Activated CD4-positive, alpha-beta T cell treated with anti-CD3 and anti-CD28 coated beads for 36 hours (primary cell): ENCODE measurements at regions of chr6 and their contacts with region 1.

Region 1: GRCh38 chr6:20708367-20709124 is 174.3 kb downstream of the CDKAL1 start:
- DNase-seq: peak; percentile 49
- ATAC-seq: peak; percentile 43
- H3K4me3 Mint-ChIP-seq: no peak overlapping the region
- H3K27ac Mint-ChIP-seq: peak overlapping the region; percentile 23
- H3K4me1 Mint-ChIP-seq: peaks cover 55% of the 10 kb centered on the region
- H3K27me3 Mint-ChIP-seq: no peaks in the 10 kb centered on the region

Region 2: DNA sequence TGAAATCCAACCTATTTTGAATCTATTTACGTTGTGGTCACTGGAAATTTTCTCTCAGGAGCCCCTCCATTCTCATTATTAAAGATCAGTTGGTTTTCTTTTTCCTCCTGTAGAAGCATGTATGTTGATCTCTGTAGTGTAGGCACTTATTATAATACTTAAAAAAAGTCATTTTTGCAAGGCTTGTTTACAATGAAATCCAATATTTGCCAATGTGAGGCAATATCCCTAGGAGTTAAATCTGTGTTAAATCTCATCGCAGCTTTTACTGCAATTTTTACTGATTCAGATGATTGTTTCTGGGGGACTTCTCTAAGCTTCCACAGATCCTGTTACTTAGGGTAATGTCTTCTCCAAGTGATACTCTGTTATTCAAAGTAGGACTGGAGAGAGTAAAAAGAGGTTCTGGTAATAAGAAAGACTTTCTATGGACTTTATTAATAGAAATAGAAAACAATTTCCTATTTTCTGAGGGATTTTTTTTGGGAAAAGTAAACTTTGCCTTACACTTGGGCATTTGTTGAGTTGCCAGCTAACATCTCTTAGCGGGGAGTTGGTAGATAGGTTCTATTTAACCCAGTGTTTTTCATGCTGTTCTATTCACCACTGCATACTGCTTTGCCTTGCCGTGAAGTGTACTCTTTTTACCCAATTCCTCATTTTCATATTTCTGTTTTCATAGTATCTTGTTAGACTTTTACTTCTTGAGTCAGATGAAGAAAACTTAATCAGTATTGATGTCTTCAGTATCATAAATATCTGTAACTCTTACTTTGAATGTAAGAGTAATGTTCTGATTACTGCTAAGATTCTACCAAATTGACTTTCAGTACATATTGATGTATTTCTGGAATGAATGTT is 125.7 kb before region 1 on chr6:
- CTCF ChIA-PET with region 1: no interaction called
- POLR2A ChIA-PET with region 1: no interaction called
- intact Hi-C with region 1: loop called in 1 of 2 experiments (anchors 1 kb)
- DNase-seq: no peak
- ATAC-seq: peak; percentile 86
- H3K4me3 Mint-ChIP-seq: no peak overlapping the region
- H3K27ac Mint-ChIP-seq: no peak overlapping the region
- H3K4me1 Mint-ChIP-seq: peaks cover 26% of the 10 kb centered on the region
- H3K27me3 Mint-ChIP-seq: no peaks in the 10 kb centered on the region

Region 3: GRCh38 chr6:20661721-20662120 is 46.8 kb before region 1 on chr6:
- CTCF ChIA-PET with region 1: no interaction called
- POLR2A ChIA-PET with region 1: no interaction called
- intact Hi-C with region 1: no loop called
- DNase-seq: no peak
- ATAC-seq: no peak
- H3K4me3 Mint-ChIP-seq: no peak overlapping the region
- H3K27ac Mint-ChIP-seq: no peak overlapping the region
- H3K4me1 Mint-ChIP-seq: peaks cover 12% of the 10 kb centered on the region
- H3K27me3 Mint-ChIP-seq: no peaks in the 10 kb centered on the region

Region 4: GRCh38 chr6:20735997-20736396 is 27.5 kb after region 1 on chr6:
- CTCF ChIA-PET with region 1: no interaction called
- POLR2A ChIA-PET with region 1: no interaction called
- intact Hi-C with region 1: no loop called
- DNase-seq: no peak
- ATAC-seq: no peak
- H3K4me3 Mint-ChIP-seq: no peak overlapping the region
- H3K27ac Mint-ChIP-seq: no peak overlapping the region
- H3K4me1 Mint-ChIP-seq: no peaks in the 10 kb centered on the region
- H3K27me3 Mint-ChIP-seq: no peaks in the 10 kb centered on the region

Region 5: DNA sequence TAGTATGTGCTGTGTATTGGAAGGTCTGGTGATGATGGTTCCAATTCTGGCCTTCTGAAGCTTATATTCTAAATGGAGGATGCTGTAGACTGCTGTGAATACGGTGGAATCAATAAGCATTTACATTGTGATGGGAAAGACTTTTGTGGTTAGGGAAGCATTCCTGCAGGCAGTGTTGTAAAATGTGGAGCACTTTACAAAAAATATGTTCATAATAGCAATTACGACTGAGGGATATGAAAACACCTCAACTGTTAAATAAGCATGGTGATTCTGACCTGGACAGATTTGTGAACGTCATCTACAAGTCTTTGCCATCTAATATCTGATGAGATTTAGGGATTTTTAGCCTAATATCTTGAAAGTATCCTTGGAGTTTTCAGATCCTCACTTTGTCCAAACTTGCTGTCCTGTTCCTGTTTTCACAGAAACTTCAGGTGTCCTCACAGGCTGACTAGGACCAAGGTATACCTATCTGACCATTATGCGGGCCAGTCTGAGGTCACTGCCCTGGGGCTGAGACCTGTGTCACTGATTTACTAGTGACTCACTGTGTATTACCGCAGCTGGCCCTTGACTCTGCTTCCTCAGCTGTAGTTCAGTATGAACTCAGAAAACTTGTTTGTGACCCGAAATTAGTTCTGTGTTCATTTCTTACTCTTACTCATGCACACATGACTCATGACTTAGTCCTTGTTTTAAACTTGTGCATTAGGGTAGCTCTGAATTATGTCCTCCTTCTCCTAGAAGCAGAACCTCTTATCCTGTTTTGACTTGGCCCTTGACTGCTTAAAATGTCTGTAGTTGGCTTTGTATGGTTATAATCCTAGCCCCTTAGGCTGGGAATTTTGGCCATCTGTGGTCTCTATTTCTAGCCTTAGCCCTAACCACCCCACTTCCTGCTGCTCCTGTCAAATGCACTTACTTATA is 168.7 kb after region 1 on chr6:
- CTCF ChIA-PET with region 1: no interaction called
- POLR2A ChIA-PET with region 1: no interaction called
- intact Hi-C with region 1: no loop called
- DNase-seq: peak; percentile 62
- ATAC-seq: peak; percentile 98
- H3K4me3 Mint-ChIP-seq: no peak overlapping the region
- H3K27ac Mint-ChIP-seq: peak overlapping the region; percentile 74
- H3K4me1 Mint-ChIP-seq: peaks cover 14% of the 10 kb centered on the region
- H3K27me3 Mint-ChIP-seq: no peaks in the 10 kb centered on the region

Region 6: GRCh38 chr6:21227486-21227885 is 518.9 kb after region 1 on chr6:
- CTCF ChIA-PET with region 1: no interaction called
- POLR2A ChIA-PET with region 1: no interaction called
- intact Hi-C with region 1: no loop called
- DNase-seq: no peak
- ATAC-seq: no peak
- H3K4me3 Mint-ChIP-seq: no peak overlapping the region
- H3K27ac Mint-ChIP-seq: no peak overlapping the region
- H3K4me1 Mint-ChIP-seq: no peaks in the 10 kb centered on the region
- H3K27me3 Mint-ChIP-seq: no peaks in the 10 kb centered on the region